ENCODE measurements at regions of chrX and their contacts with region 1.

Region 1: GRCh38 chrX:39261446-39262147 is 460.3 kb downstream of the MID1IP1 start:
- DNase-seq: no peak

Region 2: GRCh38 chrX:39445336-39445735 is 183.7 kb after region 1 on chrX:
- intact Hi-C with region 1: loop called (anchors 10 kb)
- DNase-seq: no peak

Region 3: GRCh38 chrX:39813631-39814246 is 552.1 kb after region 1 on chrX:
- intact Hi-C with region 1: no loop called
- DNase-seq: no peak

Measured in cardiac septum (tissue), 1 donor.